Right ventricle myocardium inferior (tissue), 1 donor: ENCODE measurements at regions of chr2 and their contacts with region 1.

Region 1: DNA sequence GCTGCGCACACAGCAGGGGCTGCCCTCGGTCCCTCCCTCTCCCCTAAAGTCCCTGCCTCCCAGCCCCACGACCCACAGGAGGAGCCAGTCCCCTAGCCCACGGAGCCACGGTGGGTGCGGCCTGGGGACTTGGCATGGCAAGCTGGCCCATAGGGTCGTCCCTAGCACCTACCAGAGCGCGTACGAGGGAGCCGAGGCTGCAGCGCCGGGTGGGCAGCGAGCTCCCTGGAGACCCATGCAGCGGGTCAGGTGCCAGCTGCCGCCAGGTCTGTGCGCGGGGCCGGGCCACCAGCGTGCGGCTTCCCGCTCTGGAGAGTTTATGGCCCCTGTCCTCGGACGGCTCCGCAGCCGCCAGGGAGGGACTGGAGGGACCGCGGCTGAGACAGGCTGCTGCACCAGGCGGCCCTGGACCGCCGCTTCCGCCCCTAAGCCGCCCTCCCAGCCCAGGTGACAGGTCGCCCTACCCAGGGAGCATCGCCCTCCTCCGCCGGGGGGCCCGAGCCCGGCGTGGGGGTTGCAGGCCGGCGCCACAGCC is 273.6 kb downstream of the CCDC74A start:
- DNase-seq: no peak
- ATAC-seq: no peak

Region 2: GRCh38 chr2:131402320-131403039 is 398.8 kb before region 1 on chr2:
- intact Hi-C with region 1: no loop called
- DNase-seq: no peak
- ATAC-seq: no peak

Region 3: GRCh38 chr2:131682122-131682944 is 118.9 kb before region 1 on chr2:
- intact Hi-C with region 1: loop called (anchors 5 kb)
- DNase-seq: peak; percentile 88
- ATAC-seq: peak; percentile 99

Region 4: DNA sequence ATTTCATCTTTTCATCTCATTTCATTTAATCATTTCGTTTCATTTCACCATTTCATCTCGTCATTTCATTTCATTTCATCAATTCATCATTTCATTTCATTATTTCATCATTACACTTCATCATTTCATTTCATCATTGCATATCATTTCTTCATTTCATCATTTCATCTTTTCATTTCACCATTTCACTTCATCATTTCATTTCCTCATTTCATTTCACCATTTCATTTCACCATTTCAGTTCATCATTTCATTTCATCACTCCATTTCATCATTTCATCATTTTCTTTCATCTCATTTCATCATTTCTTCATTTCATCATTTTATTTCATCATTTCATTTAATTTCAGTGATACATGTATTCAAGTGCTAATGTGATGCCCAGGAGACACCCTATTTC is 233.4 kb after region 1 on chr2:
- intact Hi-C with region 1: no loop called
- DNase-seq: no peak
- ATAC-seq: no peak